Activated CD4-positive, alpha-beta T cell treated with anti-CD3 and anti-CD28 coated beads for 36 hours (primary cell): ENCODE measurements at regions of chr11 and their contacts with region 1.

Region 1: DNA sequence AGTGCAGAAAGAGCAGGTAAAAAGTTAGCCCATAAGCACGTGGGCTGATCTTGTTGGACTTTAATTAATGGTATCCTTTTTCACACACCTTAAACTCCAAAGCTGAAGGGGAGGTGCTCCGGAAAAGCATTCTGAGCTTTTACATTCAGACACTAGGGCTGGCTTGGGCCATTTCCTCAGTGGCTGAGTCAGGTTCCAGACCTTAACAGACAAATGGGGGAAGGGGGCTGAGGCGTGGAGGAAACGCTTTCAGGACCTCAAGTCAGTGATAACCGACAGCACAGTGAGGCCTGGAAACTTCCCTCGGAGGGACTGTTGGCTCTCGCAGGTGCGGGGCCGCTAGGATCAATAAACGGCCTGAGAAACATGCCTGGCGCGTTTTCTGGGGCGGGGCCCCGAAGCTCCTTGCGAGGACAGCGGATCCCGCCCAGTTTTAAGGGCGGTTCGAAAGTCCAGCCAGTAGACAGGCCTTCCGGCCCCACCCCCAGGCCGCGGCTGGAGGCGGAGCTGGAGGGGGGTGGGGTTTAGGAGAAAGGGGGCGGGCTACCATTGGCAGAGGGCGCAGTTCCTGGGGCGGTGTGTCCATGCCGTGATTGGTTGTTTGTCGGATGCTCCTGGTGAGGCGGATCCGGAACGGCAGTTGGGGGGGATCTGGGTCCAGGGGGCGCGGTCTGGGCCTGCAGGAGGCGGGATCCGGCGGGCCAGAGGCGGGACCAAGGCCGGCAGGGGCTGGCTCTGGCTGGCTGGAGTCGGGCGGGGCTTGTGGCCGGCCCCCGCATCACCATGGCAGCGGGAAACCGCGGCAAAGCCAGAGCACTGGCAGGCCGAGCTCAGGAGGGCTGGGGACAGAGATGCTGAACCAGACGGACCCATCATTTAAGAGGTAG is 8.0 kb downstream of the C11orf52 start:
- DNase-seq: peak; percentile 96
- ATAC-seq: peak; percentile 91
- H3K4me3 Mint-ChIP-seq: peak overlapping the region; percentile 75
- H3K27ac Mint-ChIP-seq: peak overlapping the region; percentile 92
- H3K4me1 Mint-ChIP-seq: peaks cover 18% of the 10 kb centered on the region
- H3K27me3 Mint-ChIP-seq: no peaks in the 10 kb centered on the region

Region 2: DNA sequence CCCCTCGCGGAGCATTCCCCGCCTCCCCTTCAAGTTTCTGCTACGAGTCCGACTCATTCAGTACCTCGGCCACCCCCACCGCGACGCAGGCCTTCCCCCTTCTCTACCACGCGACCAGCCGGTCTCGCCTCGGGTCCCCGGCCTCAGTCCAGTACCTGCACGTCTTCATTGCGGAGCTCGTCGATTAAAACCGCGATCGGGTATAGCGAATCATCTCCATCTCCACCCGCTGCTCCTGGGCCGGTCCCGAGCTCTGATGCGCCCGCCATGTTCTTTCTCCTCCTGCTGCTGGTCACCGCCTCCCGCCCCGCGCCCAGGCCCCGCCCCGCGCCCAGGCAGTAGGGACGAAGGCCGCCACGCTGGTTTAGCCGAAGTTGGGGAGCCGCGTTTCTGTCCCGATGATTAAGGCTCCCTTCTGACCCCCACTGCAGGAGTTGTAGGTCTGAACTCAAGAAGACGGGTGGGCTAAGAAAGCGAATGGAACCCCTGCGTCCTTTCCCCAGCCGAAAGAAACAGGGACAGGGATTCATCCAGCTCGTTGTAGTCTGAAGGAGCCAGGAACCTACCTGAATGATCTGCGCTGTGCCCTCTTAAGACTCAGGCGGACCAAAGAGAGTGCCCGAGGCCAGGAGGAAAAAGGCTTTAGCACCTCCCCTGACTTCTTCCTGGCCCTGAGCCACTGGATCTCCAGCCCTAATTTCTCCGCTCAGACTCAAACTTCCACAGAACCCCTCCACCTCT is 160.5 kb before region 1 on chr11 and contains the start of gene PPP2R1B:
- CTCF ChIA-PET with region 1: no interaction called
- POLR2A ChIA-PET with region 1: no interaction called
- intact Hi-C with region 1: loop called (anchors 1 to 5 kb)
- DNase-seq: peak; percentile 85
- ATAC-seq: peak; percentile 95
- H3K4me3 Mint-ChIP-seq: peak within 1 kb of the TSS; percentile 85
- H3K27ac Mint-ChIP-seq: peak within 1 kb of the TSS; percentile 98
- H3K4me1 Mint-ChIP-seq: peaks cover 32% of the 10 kb centered on the region
- H3K27me3 Mint-ChIP-seq: no peaks in the 10 kb centered on the region
- total RNA-seq, gene PPP2R1B: 39.1 to 53.9 TPM

Region 3: DNA sequence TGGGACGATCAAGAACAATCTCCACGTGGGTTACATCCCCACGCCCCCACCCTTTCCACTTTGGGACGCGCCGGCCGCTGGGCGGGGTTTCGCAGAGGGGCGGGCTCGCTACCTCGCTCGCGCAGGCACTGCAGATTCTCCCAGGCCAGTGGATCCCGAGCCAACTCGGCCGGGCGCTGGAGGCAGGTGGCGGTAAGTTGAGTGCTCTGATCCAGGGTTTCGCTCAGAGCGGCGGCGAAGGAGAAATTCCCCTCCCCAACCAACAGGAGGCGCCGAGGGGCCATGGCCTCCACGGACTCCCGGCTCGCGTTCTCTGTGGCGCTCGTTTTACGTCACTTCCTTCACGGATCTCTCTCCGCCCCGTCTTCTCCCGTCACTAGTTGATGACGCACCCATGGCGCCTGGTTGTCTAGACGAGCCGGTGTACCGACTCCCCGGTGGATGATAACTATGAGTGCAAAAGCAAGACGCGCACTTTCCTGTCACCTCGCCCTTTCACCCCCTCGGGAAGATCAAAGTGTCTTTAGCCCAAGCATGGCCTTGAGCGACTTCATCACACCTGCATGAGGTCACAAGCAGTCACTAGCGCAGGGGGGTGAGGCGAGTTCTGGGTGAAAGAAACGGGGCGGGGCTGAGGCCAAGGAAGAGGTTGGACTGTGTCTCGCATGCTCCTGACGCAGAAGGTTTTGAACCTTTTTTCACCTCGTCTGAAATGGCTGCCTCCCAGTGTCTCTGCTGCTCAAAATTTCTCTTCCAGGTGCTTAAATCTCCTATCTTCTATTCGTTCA is 47.7 kb before region 1 on chr11 and contains the starts of genes CFAP68 and FDXACB1:
- CTCF ChIA-PET with region 1: interaction called, 6 read pairs
- POLR2A ChIA-PET with region 1: interaction called, 3 read pairs
- intact Hi-C with region 1: loop called (anchors 1 kb)
- DNase-seq: peak; percentile 97
- ATAC-seq: peak; percentile 92
- H3K4me3 Mint-ChIP-seq: peak within 1 kb of the TSS; percentile 78
- H3K27ac Mint-ChIP-seq: peak within 1 kb of the TSS; percentile 96
- H3K4me1 Mint-ChIP-seq: peaks cover 26% of the 10 kb centered on the region
- H3K27me3 Mint-ChIP-seq: no peaks in the 10 kb centered on the region
- total RNA-seq, gene CFAP68: 32.1 to 49.7 TPM
- total RNA-seq, gene FDXACB1: 5.9 to 6.0 TPM

Region 4: DNA sequence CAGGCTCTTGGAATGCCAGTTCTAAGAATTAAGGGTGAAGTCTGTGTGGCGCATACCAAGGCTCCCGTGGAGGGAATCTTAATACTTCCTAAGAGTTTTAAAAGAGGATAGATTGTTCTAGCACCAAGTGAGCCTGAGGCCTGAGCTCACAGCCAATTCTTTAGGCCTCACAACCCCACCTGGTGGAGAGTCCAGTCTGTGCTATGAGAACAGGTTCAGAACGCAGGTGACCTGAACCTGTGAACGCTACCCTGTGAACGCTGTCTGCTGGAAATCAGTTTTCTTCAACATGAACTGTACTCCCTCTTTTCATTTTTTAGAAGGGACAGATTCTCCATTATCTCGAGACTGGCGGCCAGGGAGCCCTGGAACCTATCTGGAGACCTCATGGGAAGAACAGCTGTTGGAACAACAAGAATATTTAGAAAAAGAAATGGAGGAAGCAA is 55.3 kb after region 1 on chr11:
- CTCF ChIA-PET with region 1: interaction called, 47 read pairs
- POLR2A ChIA-PET with region 1: interaction called, 5 read pairs
- intact Hi-C with region 1: loop called (anchors 1 kb)
- DNase-seq: peak; percentile 78
- ATAC-seq: peak; percentile 88
- H3K4me3 Mint-ChIP-seq: no peak overlapping the region
- H3K27ac Mint-ChIP-seq: no peak overlapping the region
- H3K4me1 Mint-ChIP-seq: peaks cover 7% of the 10 kb centered on the region
- H3K27me3 Mint-ChIP-seq: peaks cover 22% of the 10 kb centered on the region

Region 5: DNA sequence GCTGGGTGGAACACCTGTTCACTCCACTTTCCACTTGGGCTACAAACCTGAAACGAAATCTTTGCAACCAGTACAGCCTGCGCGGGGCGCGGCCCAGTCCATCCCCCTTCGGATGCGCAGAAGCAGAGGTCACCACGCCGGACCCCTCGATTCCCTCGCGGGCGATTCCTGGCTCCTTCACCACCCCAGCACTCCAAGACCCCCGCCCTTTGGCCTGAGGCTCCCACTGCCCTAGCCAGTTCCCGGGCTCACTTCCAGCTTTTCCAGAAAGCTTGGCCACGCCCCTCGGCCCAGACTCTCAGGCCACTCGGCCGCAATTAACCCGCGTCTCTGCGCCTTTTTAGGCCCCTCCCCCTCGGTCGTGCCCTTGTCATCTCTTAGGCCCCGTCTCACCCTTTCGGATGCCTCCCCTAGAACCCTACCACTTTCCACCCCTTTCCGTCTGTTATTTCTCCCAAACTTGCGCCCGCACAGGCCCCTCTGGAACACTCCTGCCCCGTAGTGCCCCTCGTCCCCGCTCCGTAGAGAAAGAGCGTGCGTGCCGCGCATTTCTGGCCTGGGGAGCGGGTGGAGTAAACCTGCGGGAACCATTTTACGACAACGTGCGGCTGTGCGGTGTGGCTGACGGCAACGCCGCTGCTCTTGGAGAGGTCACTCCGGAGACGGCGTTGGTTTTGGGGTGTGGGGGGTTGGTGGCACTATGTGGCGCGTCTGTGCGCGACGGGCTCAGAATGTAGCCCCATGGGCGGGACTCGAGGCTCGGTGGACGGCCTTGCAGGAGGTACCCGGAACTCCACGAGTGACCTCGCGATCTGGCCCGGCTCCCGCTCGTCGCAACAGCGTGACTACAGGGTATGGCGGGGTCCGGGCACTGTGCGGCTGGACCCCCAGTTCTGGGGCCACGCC is 98.3 kb after region 1 on chr11 and contains the start of gene DLAT:
- CTCF ChIA-PET with region 1: interaction called, 6 read pairs
- POLR2A ChIA-PET with region 1: interaction called, 3 read pairs
- intact Hi-C with region 1: loop called (anchors 1 to 2 kb)
- DNase-seq: peak; percentile 93
- ATAC-seq: peak; percentile 90
- H3K4me3 Mint-ChIP-seq: peak within 1 kb of the TSS; percentile 96
- H3K27ac Mint-ChIP-seq: peak within 1 kb of the TSS; percentile 100
- H3K4me1 Mint-ChIP-seq: peaks cover 19% of the 10 kb centered on the region
- H3K27me3 Mint-ChIP-seq: no peaks in the 10 kb centered on the region
- total RNA-seq, gene DLAT: 47.8 to 49.1 TPM

Region 6: GRCh38 chr11:112086422-112087191 is 159.9 kb after region 1 on chr11 and contains the starts of genes SDHD and TIMM8B:
- CTCF ChIA-PET with region 1: interaction called, 6 read pairs
- POLR2A ChIA-PET with region 1: interaction called, 3 read pairs
- intact Hi-C with region 1: loop called (anchors 1 kb)
- DNase-seq: peak; percentile 97
- ATAC-seq: peak; percentile 86
- H3K4me3 Mint-ChIP-seq: peak within 1 kb of the TSS; percentile 97
- H3K27ac Mint-ChIP-seq: peak within 1 kb of the TSS; percentile 93
- H3K4me1 Mint-ChIP-seq: peaks cover 63% of the 10 kb centered on the region
- H3K27me3 Mint-ChIP-seq: no peaks in the 10 kb centered on the region
- total RNA-seq, gene SDHD: 79.8 to 84.9 TPM
- total RNA-seq, gene TIMM8B: 50.5 to 52.6 TPM

Region 7: DNA sequence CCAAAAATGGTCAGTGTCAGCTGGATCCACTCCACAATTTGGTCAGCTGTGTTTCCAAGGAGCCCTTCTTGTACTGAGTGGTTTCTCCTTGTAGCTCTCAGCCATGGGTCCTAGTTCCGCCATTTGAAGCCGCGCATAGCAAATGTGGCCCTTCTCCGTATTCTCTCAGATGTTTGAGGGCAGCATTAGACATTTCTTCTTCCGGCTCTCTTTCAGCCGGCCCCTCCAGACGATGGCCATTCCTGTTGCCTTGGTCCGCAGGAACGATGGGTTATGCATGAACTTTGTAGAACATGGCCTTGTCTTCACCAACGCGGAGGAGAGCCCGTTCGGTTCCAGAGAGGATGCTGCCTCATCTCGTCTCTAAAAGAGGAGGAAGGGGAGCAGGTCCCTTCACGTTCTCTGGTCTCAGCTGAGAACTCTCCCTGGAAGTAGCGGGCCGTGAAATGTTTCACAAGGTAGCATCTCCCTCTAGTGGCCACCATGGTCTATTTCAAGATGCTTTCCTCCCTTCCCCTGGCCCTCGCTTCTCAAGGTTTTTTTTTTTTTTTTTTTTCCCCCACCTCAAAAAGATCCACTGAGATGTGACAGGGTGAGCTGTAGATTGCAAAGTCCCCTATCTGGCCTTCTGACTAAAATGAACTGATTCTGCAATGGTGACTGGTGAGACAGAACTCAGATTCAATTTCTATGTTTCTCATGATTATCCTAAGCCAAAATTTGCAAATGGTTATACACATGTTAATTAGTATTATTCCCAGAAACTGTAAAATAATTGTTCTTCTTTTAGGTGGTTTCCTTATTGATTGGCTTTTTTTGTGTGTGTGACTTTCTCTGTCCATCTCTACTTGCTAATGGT is 353.7 kb after region 1 on chr11:
- CTCF ChIA-PET with region 1: interaction called, 4 read pairs
- POLR2A ChIA-PET with region 1: no interaction called
- intact Hi-C with region 1: loop called in 1 of 2 experiments (anchors 2 kb)
- DNase-seq: peak; percentile 77
- ATAC-seq: peak; percentile 92
- H3K4me3 Mint-ChIP-seq: peak overlapping the region; percentile 82
- H3K27ac Mint-ChIP-seq: peak overlapping the region; percentile 76
- H3K4me1 Mint-ChIP-seq: peaks cover 14% of the 10 kb centered on the region
- H3K27me3 Mint-ChIP-seq: no peaks in the 10 kb centered on the region